Ovary (tissue), 10 donors: ENCODE measurements at regions of chr4 and their contacts with region 1.

Region 1: GRCh38 chr4:17854036-17854435 is 43.3 kb downstream of the NCAPG start:
- DNase-seq: no peak
- H3K4me3 ChIP-seq: no peak overlapping the region
- H3K27ac ChIP-seq: no peak overlapping the region
- H3K4me1 ChIP-seq: no peaks in the 10 kb centered on the region
- H3K27me3 ChIP-seq: no peaks in the 10 kb centered on the region
- CTCF ChIP-seq: no peak
- EP300 ChIP-seq: no peak
- POLR2A ChIP-seq: no peak

Region 2: GRCh38 chr4:17915439-17915838 is 61.4 kb after region 1 on chr4:
- intact Hi-C with region 1: no loop called
- DNase-seq: no peak
- H3K4me3 ChIP-seq: no peak overlapping the region
- H3K27ac ChIP-seq: no peak overlapping the region
- H3K4me1 ChIP-seq: no peaks in the 10 kb centered on the region
- H3K27me3 ChIP-seq: no peaks in the 10 kb centered on the region
- CTCF ChIP-seq: no peak
- EP300 ChIP-seq: no peak
- POLR2A ChIP-seq: no peak

Region 3: GRCh38 chr4:18075823-18076433 is 221.9 kb after region 1 on chr4:
- intact Hi-C with region 1: no loop called
- DNase-seq: peak in 1 of 5 donors; percentile 18
- H3K4me3 ChIP-seq: no peak overlapping the region
- H3K27ac ChIP-seq: no peak overlapping the region
- H3K4me1 ChIP-seq: no peaks in the 10 kb centered on the region
- H3K27me3 ChIP-seq: no peaks in the 10 kb centered on the region
- CTCF ChIP-seq: no peak
- EP300 ChIP-seq: no peak
- POLR2A ChIP-seq: no peak

Region 4: DNA sequence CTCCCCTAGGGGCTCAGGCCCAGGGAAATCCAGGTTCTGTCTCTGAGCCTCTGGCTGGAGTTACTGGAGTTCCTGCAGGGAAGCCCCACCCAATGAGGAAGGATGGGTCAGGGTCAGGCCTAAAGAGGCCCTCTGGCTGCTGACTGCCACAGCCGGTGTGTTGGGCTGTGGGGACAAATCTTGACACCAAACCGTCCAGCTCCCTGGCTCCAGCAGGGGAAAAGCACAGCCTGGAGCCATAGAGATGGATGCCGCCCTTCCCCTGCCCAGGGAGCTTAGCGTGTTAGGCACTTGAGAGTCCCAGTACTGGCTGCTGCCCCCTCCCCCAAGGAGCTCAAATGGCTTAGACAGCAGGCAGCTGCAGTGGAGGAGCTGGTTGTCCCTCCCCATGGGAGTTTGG is 488.8 kb after region 1 on chr4:
- intact Hi-C with region 1: loop called in 1 of 4 experiments (anchors 5 kb)
- DNase-seq: no peak
- H3K4me3 ChIP-seq: no peak overlapping the region
- H3K27ac ChIP-seq: no peak overlapping the region
- H3K4me1 ChIP-seq: no peaks in the 10 kb centered on the region
- H3K27me3 ChIP-seq: no peaks in the 10 kb centered on the region
- CTCF ChIP-seq: no peak
- EP300 ChIP-seq: no peak
- POLR2A ChIP-seq: no peak